Head of caudate nucleus (tissue), 42 donors: ENCODE measurements at regions of chr5 and their contacts with region 1.

Region 1: DNA sequence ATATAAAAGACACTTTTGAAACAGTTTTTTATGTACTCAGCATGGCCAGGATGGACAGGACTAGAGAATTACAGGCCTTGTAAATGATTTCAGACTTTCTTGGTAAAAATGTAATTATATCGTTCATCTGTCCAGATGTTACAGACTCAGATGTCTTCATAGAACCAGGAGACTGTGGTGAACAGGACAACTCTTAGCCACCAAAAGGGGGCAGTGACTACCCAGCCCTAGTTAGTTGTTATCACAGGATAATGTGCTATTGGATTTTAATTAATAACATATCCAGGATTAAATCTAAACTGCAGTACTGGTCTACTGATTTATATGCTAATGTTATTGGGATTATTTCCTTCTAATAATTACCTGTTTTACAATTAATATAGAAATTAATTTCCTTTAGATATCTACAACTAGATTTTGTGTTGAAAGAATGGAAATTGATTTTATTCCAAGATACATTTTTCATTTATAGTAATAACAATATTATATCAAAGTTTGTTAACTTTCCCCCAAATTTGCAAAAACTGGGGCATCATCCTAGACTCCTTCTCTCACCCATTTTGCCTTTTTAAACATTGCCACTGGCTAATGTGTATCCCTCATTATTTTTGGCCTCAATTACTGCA is 99.4 kb downstream of the MTREX start:
- DNase-seq: peak in 32 of 42 donors; percentile 21 to 84 (median 53)

Region 2: GRCh38 chr5:54825005-54825404 is 582.2 kb before region 1 on chr5:
- intact Hi-C with region 1: no loop called
- DNase-seq: no peak

Region 3: DNA sequence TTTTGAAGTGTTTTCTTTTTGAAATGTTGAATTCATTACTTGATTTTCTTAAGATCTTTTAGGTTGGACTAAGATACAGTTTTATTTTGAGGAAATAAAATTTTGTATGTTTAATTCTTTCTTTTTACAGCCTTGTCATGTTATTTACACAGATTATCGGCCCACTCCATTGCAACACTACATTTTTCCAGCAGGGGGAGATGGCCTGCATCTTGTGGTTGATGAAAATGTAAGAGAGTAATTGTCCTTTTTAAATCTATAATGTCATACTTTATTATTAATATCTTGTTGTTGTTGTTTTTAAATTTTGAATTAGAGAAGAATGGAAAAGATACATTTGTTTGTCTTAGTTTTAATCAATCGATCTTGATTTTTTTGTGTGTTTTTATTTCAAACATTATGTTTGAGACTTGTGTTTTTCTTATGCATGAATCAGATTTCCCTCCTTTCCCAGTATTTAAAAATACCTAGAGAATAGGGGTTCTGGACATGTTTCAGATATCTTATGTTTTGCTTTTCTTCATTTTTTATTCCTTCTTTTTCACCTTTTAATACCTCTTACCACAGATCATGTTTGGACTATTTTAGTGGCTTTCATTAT is 62.7 kb before region 1 on chr5:
- intact Hi-C with region 1: loop called (anchors 10 kb)
- DNase-seq: peak in 41 of 42 donors; percentile 26 to 90 (median 73)

Region 4: DNA sequence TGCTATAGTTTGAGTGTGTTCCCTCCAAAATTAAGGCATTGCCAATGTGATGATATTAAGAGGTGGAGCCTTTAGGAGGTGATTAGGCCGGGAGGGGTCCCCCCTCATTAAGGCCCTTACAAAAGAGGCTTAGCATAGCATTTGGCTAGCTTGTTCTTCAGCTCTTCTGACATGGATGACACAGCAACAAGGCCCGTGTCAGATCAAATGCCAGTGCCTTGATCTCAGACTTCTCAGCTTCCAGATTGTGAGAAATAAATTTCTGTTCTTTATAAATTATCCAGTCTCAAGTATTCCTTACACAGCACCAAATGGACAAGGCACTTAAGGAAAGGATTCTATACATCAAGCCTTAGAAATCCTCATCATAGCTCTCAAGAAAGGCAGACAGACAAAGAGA is 273.2 kb after region 1 on chr5:
- intact Hi-C with region 1: loop called (anchors 10 kb)
- DNase-seq: peak in 8 of 42 donors; percentile 5 to 54 (median 25)